ENCODE measurements at regions of chr3 and their contacts with region 1.

Region 1: GRCh38 chr3:45760878-45761711 is 35.2 kb downstream of the SLC6A20 start:
- DNase-seq: peak; percentile 55
- H3K4me3 ChIP-seq: no peak overlapping the region
- H3K27ac ChIP-seq: no peak overlapping the region
- H3K27me3 ChIP-seq: peaks cover 18% of the 10 kb centered on the region
- CTCF ChIP-seq: peak; percentile 89

Region 2: GRCh38 chr3:45730409-45731154 is 30.5 kb before region 1 on chr3:
- CTCF ChIA-PET with region 1: no interaction called
- POLR2A ChIA-PET with region 1: interaction called, 10 read pairs
- DNase-seq: no peak
- H3K4me3 ChIP-seq: no peak overlapping the region
- H3K27ac ChIP-seq: no peak overlapping the region
- H3K27me3 ChIP-seq: no peaks in the 10 kb centered on the region
- CTCF ChIP-seq: no peak

Region 3: GRCh38 chr3:45906681-45907407 is 145.7 kb after region 1 on chr3:
- CTCF ChIA-PET with region 1: interaction called, 12 read pairs
- POLR2A ChIA-PET with region 1: no interaction called
- DNase-seq: peak; percentile 44
- H3K4me3 ChIP-seq: no peak overlapping the region
- H3K27ac ChIP-seq: no peak overlapping the region
- H3K27me3 ChIP-seq: peaks cover 7% of the 10 kb centered on the region
- CTCF ChIP-seq: peak; percentile 66

Region 4: DNA sequence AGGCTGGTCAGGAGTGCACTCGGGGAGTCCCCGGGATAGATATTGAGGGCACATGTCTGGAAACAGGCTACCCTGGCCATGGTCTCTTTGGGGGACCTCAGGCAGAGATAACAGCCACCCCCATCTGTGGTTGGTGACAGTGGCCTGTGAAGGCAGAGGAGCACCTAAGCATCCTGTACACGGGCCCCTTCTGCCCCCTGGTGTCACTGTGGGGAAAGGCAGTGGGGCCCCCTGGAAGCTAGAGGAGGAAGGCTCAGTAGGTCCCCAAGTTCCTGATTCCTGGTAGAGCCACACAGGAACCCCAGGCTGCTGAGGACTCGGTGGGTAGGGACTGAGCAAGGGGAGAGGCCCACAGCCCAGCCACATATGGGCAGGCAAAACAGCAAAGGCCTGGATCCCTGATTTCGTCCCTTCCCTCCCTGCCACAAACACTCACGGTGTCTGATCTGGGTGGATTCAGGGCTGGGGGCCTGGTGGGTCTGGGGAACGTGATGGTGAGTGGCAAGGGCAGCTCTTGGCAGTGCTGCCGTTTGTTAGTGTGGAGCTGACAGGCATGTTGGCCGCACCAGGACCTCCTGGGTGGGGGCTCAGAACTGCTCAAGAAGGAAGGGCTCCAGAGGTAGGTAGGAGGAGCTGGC is 168.1 kb after region 1 on chr3:
- CTCF ChIA-PET with region 1: interaction called, 60 read pairs
- POLR2A ChIA-PET with region 1: no interaction called
- DNase-seq: no peak
- H3K4me3 ChIP-seq: no peak overlapping the region
- H3K27ac ChIP-seq: no peak overlapping the region
- H3K27me3 ChIP-seq: no peaks in the 10 kb centered on the region
- CTCF ChIP-seq: peak; percentile 92

Measured in AG04450 (cell line).